ENCODE measurements at regions of chr11 and their contacts with region 1.

Region 1: DNA sequence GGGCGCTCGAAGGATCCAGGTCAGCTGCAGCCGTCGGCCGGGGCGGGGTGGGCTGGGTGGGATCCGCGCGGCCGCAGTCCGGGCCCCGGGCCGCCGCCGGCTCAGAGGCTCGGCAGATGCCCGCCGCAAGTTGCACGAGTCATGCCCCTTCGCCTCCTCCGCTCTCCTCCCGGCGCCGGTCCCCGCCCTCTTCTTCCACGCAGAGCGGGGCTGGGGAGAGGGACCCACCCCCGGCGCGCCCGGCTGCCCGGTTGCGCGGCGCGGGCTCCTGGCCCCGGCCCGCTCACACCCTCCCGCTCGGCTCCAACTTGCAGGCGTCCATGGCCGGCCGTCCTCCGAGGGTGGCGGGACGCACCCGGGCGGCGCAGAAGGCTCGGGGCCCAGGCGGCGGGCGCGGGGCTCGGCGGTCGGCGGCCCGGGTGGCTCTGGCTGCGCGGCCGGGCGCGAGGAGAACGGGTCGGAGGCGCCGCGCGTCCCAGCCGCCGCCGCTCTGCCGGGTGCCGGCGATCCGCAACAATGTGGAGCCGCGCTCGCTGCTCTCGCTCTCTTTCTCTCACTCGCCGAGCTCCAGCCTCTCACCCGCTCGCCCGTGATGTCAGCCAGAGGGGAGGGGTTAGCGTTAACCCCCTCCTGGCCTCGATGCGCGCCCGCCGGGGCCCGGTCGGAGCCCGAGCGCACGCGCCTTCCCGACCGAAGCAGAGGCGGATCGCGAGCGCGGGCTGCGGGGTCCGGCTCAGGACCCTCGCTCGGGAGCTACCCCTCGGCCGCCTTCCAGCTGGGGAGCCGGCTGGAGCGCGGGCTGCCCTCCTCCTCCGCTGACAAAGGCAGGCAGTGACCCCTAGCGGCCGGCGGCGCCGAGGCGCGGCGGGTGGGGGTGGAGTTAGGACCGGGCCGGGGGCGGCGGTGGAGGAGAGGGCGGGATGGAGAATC is at the start of gene NECTIN1:
- DNase-seq: peak; percentile 73 to 86 (median 80)
- H3K4me3 ChIP-seq: peak within 1 kb of the TSS; percentile 67
- H3K4me3 Mint-ChIP-seq: peak within 1 kb of the TSS; percentile 91 to 97 (median 94)
- H3K27ac ChIP-seq: peak within 1 kb of the TSS; percentile 24
- H3K27ac Mint-ChIP-seq: peak within 1 kb of the TSS; percentile 78 to 94 (median 88)
- H3K4me1 ChIP-seq: peaks cover 21% of the 10 kb centered on the region
- H3K4me1 Mint-ChIP-seq: peaks cover 12 to 25% (median 12%) of the 10 kb centered on the region in 3 donors
- H3K27me3 ChIP-seq: peaks cover 17% of the 10 kb centered on the region
- H3K27me3 Mint-ChIP-seq: peaks cover 22 to 34% of the 10 kb centered on the region in 2 donors
- total RNA-seq, gene NECTIN1: 3.0 to 3.8 TPM

Region 2: DNA sequence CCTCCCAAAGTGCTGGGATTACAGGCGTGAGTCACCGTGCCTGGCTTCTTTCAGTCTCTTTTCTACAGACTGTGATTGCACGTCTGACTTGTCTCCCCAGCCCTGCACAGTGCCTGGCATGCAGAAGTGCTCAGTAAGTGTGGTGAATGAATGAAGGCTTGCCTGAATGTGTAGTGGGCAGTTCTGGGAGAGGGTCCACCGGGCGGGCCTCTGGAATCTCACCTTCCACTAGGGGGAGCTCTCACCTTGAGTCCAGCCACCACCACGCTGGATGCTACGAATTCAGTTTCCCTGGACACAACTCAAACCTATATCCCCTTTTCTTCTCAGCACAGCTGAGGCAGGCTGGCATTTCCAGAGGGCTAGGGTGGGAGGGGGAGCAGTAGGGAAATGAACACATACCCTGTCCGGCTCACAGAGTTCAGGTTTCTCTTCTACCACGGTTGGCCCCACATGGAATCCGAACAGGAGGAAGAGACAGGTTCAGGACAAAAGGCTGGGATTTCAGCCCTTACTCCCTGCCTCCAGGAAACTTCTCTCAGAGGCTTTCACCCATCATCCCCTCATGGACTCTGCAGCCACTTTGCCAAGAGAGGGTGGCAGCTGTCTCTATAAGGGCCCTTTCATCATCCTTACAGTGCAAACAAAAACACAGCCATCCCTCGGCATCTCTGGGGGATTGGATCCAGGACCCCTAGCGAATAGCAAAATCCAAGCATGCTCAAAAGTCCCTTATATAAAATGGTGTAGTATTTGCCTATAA is 86.8 kb before region 1 on chr11:
- CTCF ChIA-PET with region 1: interaction called, 12 read pairs
- POLR2A ChIA-PET with region 1: no interaction called
- DNase-seq: no peak
- H3K4me3 ChIP-seq: no peak overlapping the region
- H3K4me3 Mint-ChIP-seq: no peak overlapping the region
- H3K27ac ChIP-seq: no peak overlapping the region
- H3K27ac Mint-ChIP-seq: no peak overlapping the region
- H3K4me1 ChIP-seq: no peaks in the 10 kb centered on the region
- H3K4me1 Mint-ChIP-seq: no peaks in the 10 kb centered on the region
- H3K27me3 ChIP-seq: no peaks in the 10 kb centered on the region
- H3K27me3 Mint-ChIP-seq: peaks cover 5 to 20% of the 10 kb centered on the region in 2 donors

Region 3: DNA sequence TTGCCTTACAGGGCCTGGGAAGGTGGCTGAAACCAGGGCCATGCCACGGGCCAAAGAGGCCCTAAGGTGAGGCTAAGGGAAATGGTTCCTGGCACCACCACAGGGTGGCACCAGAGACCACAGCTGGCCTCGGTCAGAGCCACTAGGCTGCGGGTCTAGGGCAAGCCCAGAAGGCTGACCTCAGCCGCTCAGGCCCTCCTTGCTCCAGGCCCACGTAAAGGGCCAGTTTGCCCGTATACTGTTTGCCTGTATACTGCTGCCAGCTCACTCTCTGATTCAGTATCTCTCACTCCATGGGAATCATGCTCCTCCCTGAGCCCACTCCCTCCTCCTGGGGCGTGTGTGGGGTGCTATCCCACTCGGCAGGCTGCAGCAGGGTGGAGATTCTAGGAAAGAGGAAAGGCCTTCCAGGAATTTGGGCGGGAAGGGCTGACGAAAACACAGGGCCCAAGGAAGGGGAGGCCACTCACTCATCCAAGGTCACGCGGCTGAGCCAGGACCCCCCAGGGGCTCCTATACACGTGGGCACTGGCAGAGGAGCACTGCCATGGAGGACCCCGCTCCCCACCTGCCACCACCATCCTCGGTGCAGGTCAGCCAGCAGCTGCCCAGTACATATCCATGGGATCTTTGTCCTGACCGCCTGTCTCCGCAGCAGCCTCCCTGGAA is 62.3 kb before region 1 on chr11:
- CTCF ChIA-PET with region 1: interaction called, 11 read pairs
- POLR2A ChIA-PET with region 1: no interaction called
- DNase-seq: peak; percentile 30 to 64 (median 37)
- H3K4me3 ChIP-seq: no peak overlapping the region
- H3K4me3 Mint-ChIP-seq: no peak overlapping the region
- H3K27ac ChIP-seq: no peak overlapping the region
- H3K27ac Mint-ChIP-seq: no peak overlapping the region
- H3K4me1 ChIP-seq: no peaks in the 10 kb centered on the region
- H3K4me1 Mint-ChIP-seq: no peaks in the 10 kb centered on the region
- H3K27me3 ChIP-seq: no peaks in the 10 kb centered on the region
- H3K27me3 Mint-ChIP-seq: peaks cover 0 to 2% of the 10 kb centered on the region in 2 donors

Region 4: DNA sequence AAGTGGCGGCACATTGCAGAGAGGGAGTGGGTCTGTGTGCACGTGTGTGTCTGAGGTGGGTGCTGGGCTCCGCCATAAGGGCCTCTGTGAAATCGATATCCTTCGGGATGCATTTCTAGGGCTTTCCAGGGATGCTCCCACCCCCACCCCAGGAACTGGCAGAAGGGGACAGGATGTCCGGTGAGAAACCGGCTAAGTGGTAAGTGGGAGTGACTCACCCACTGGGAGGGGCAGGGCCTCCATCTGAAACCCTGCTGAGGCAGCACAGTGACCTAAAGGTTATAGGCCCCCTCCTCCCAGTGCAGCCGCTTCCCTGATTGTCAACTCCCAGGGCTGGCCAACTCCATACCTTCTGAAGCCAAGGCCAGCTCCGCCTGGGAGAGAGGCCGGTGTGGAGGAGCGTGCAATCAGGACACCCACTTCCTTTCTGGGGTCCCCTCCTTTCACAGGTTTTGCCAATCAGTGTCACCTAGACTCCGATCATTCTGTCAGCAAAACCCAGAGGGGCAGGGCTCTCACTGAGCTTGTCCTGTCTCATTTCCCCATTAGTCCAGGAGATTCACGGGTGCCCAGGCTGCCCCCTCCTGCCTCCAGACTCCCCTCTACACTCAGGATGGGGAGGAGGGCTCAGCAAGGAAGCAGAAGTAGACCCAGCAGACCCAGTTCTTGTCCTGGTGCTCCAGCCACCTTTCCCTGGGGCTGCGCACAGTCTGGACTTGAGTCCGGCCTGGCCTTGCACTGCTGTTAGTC is 44.4 kb before region 1 on chr11:
- CTCF ChIA-PET with region 1: interaction called, 14 read pairs
- POLR2A ChIA-PET with region 1: no interaction called
- DNase-seq: no peak
- H3K4me3 ChIP-seq: no peak overlapping the region
- H3K4me3 Mint-ChIP-seq: peak overlapping the region in 4 of 7 donors; percentile 8 to 71 (median 53)
- H3K27ac ChIP-seq: no peak overlapping the region
- H3K27ac Mint-ChIP-seq: peak overlapping the region in 1 of 8 donors; percentile 52
- H3K4me1 ChIP-seq: no peaks in the 10 kb centered on the region
- H3K4me1 Mint-ChIP-seq: peaks cover 9 to 25% (median 18%) of the 10 kb centered on the region in 3 donors
- H3K27me3 ChIP-seq: peaks cover 4% of the 10 kb centered on the region
- H3K27me3 Mint-ChIP-seq: peaks cover 15% of the 10 kb centered on the region in 2 donors

Region 5: GRCh38 chr11:119717839-119718534 is 10.9 kb before region 1 on chr11:
- CTCF ChIA-PET with region 1: interaction called, 12 read pairs
- POLR2A ChIA-PET with region 1: no interaction called
- DNase-seq: no peak
- H3K4me3 ChIP-seq: no peak overlapping the region
- H3K4me3 Mint-ChIP-seq: no peak overlapping the region
- H3K27ac ChIP-seq: no peak overlapping the region
- H3K27ac Mint-ChIP-seq: no peak overlapping the region
- H3K4me1 ChIP-seq: no peaks in the 10 kb centered on the region
- H3K4me1 Mint-ChIP-seq: no peaks in the 10 kb centered on the region
- H3K27me3 ChIP-seq: no peaks in the 10 kb centered on the region
- H3K27me3 Mint-ChIP-seq: peaks cover 2 to 17% of the 10 kb centered on the region in 2 donors

Region 6: DNA sequence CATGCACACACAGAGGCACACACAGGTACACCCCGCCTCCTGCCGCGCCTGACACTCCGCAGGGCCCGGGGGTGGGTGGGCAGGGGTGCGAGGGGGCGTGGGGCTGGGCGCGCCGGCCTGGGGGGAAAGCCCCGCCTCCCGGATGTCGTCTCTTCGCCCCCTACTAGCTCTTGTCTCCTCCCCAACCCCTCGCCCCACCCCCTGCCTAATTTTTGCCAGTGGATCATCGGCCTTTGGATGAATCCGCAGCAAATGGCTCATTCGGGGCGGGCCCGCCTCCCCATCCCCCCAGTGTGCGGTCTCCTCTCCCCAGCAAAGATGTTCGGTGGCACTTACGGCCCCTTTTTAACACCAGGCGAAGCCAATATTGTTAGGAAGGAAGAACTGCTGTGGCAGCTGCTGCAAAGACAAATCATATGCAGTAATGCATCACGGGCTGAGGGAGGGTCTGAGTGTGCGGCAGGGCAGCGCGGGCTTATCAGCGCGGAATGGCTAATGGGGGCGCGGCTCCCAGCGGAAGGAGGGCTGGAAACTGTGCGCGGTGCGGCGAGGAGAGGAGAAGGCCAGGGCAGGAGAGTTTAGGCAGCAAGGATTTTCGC is 13.4 kb after region 1 on chr11:
- CTCF ChIA-PET with region 1: interaction called, 18 read pairs
- POLR2A ChIA-PET with region 1: interaction called, 3 read pairs
- DNase-seq: peak in 2 of 5 donors; percentile 10 to 17
- H3K4me3 ChIP-seq: no peak overlapping the region
- H3K4me3 Mint-ChIP-seq: peak overlapping the region; percentile 21 to 82 (median 63)
- H3K27ac ChIP-seq: no peak overlapping the region
- H3K27ac Mint-ChIP-seq: peak overlapping the region in 1 of 8 donors; percentile 55
- H3K4me1 ChIP-seq: no peaks in the 10 kb centered on the region
- H3K4me1 Mint-ChIP-seq: peaks cover 6 to 16% (median 12%) of the 10 kb centered on the region in 3 donors
- H3K27me3 ChIP-seq: peaks cover 13% of the 10 kb centered on the region
- H3K27me3 Mint-ChIP-seq: peaks cover 46 to 76% of the 10 kb centered on the region in 2 donors

Region 7: GRCh38 chr11:119816660-119817059 is 87.7 kb after region 1 on chr11:
- CTCF ChIA-PET with region 1: no interaction called
- POLR2A ChIA-PET with region 1: no interaction called
- DNase-seq: no peak
- H3K4me3 ChIP-seq: no peak overlapping the region
- H3K4me3 Mint-ChIP-seq: no peak overlapping the region
- H3K27ac ChIP-seq: no peak overlapping the region
- H3K27ac Mint-ChIP-seq: no peak overlapping the region
- H3K4me1 ChIP-seq: no peaks in the 10 kb centered on the region
- H3K4me1 Mint-ChIP-seq: no peaks in the 10 kb centered on the region
- H3K27me3 ChIP-seq: peaks cover 7% of the 10 kb centered on the region
- H3K27me3 Mint-ChIP-seq: peaks cover 3 to 31% of the 10 kb centered on the region in 2 donors